ENCODE measurements at regions of chr2 and their contacts with region 1.

Region 1: GRCh38 chr2:165594935-165595255 is 125.4 kb downstream of the CSRNP3 start:
- DNase-seq: peak; percentile 77
- ATAC-seq: peak; percentile 84
- H3K4me3 ChIP-seq: no peak overlapping the region
- H3K27ac ChIP-seq: no peak overlapping the region
- H3K4me1 ChIP-seq: no peaks in the 10 kb centered on the region
- H3K27me3 ChIP-seq: no peaks in the 10 kb centered on the region
- CTCF ChIP-seq: no peak
- EP300 ChIP-seq: no peak; a peak in 1 of 4 replicates
- POLR2A ChIP-seq: no peak
- RAD21 ChIP-seq: no peak

Region 2: DNA sequence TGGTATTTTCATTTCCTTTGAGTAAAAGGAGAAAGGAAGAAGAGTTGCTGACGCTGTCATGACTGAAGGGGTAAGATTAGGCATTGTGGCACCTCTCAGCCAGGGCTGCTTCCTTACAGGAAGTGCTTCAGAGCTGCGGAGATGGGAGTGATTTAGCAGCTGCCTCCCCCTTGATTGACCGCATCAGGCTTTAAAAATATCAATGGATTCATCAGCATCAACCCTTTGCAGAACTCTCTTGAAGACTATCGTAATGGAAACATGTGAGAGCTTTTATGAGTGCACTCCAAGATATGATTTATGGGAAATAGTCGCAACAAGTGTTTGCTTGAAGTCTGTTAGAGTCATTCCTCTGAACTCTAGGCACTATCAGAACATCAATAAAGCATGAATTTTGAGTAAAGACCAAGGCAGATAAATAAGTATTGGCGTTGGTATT is 15.7 kb after region 1 on chr2:
- CTCF ChIA-PET with region 1: interaction called, 15 read pairs
- POLR2A ChIA-PET with region 1: interaction called, 5 read pairs
- RAD21 ChIA-PET with region 1: interaction called, 8 read pairs
- SMC1A ChIA-PET with region 1: interaction called, 30 read pairs
- in situ Hi-C with region 1: no loop called
- intact Hi-C with region 1: no loop called
- DNase-seq: no peak
- ATAC-seq: peak; percentile 86
- H3K4me3 ChIP-seq: no peak overlapping the region
- H3K27ac ChIP-seq: no peak overlapping the region
- H3K4me1 ChIP-seq: no peaks in the 10 kb centered on the region
- H3K27me3 ChIP-seq: no peaks in the 10 kb centered on the region
- CTCF ChIP-seq: no peak
- EP300 ChIP-seq: no peak
- POLR2A ChIP-seq: no peak
- RAD21 ChIP-seq: no peak

Region 3: GRCh38 chr2:165857876-165858275 is 263.0 kb after region 1 on chr2:
- CTCF ChIA-PET with region 1: no interaction called
- POLR2A ChIA-PET with region 1: no interaction called
- RAD21 ChIA-PET with region 1: no interaction called
- SMC1A ChIA-PET with region 1: no interaction called
- in situ Hi-C with region 1: no loop called
- intact Hi-C with region 1: no loop called
- DNase-seq: no peak
- ATAC-seq: no peak
- H3K4me3 ChIP-seq: no peak overlapping the region
- H3K27ac ChIP-seq: no peak overlapping the region
- H3K4me1 ChIP-seq: no peaks in the 10 kb centered on the region
- H3K27me3 ChIP-seq: no peaks in the 10 kb centered on the region
- CTCF ChIP-seq: no peak
- EP300 ChIP-seq: no peak
- POLR2A ChIP-seq: no peak
- RAD21 ChIP-seq: no peak

Measured in GM12878 (cell line).